ENCODE measurements at regions of chr16 and their contacts with region 1.

Region 1: DNA sequence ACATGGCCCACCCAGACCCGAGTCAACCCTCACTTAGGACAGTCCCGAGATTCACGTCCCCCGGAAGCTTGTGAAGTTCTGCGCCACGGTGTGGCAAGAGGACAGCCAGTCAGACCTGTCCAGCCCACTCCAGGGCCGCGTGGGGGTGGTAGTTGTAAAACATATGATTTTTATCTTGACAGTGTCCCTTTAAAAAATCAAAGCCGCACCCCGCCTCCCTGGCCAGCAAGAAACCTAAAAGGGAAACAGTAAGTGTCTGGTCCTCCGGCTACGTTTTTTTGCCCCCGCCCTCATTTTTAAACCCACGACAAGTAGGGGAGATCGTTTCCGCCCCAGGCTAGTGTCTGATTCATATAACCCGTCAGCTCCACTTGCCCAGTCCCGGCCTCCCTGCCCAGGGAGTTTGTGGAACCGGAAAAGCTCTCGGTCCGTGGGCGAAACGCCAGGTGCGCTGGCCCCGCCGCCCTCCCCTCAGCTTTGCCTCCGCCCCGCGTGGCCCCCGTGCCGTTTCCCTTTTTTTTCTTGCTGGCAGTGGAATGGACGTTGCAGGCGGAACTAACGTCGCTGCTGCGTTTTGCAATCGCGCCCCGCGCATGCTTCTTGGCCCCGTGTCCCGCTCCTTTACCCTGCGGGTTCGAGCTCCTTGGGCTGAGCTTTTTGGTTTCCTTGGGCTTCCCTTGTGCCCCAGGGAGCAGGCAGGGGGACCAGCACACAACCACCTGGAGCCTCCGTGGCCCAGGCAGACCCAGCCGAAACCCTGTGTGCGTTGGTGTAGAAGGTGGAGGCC is 13.3 kb upstream of the NUDT16L1 start:
- DNase-seq: no peak
- H3K4me3 Mint-ChIP-seq: no peak overlapping the region
- H3K27ac Mint-ChIP-seq: no peak overlapping the region
- H3K4me1 Mint-ChIP-seq: peaks cover 30% of the 10 kb centered on the region
- H3K27me3 Mint-ChIP-seq: no peaks in the 10 kb centered on the region

Region 2: DNA sequence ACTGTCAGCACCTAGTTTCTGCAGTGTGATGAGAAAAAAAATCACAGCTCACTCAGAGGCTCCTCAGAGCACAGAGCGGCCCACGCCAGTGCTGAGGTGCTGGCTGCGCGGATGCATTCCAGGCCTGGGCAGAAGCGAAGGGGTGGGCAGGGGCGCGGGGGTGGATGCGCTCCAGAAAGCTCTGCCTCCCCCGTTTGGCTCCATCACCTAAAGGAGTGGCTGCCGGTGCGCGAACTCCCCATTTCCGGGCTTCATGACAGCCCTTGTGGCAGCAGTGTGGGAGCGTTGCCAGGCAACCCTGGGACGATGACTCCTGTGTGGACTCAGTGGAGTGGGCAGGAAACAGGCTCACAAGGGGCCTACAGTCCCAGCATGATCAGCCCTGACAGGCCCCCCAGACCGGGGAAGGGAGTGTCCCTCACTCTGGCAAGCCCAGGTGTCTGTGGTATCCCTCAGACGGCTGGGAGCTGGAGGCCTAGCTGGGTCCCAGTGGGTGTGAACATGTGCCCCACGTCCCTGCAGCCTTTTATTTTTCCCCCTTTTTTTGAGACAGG is 19.5 kb before region 1 on chr16:
- intact Hi-C with region 1: loop called (anchors 1 kb)
- DNase-seq: peak; percentile 60
- H3K4me3 Mint-ChIP-seq: peak overlapping the region; percentile 54
- H3K27ac Mint-ChIP-seq: peak overlapping the region; percentile 88
- H3K4me1 Mint-ChIP-seq: peaks cover 44% of the 10 kb centered on the region
- H3K27me3 Mint-ChIP-seq: no peaks in the 10 kb centered on the region

Region 3: GRCh38 chr16:4696172-4696904 is 16.3 kb after region 1 on chr16:
- intact Hi-C with region 1: no loop called
- DNase-seq: no peak
- H3K4me3 Mint-ChIP-seq: peak overlapping the region; percentile 33
- H3K27ac Mint-ChIP-seq: no peak overlapping the region
- H3K4me1 Mint-ChIP-seq: peaks cover 6% of the 10 kb centered on the region
- H3K27me3 Mint-ChIP-seq: no peaks in the 10 kb centered on the region